Brain microvascular endothelial cell (primary cell): ENCODE measurements at regions of chr11 and their contacts with region 1.

Region 1: DNA sequence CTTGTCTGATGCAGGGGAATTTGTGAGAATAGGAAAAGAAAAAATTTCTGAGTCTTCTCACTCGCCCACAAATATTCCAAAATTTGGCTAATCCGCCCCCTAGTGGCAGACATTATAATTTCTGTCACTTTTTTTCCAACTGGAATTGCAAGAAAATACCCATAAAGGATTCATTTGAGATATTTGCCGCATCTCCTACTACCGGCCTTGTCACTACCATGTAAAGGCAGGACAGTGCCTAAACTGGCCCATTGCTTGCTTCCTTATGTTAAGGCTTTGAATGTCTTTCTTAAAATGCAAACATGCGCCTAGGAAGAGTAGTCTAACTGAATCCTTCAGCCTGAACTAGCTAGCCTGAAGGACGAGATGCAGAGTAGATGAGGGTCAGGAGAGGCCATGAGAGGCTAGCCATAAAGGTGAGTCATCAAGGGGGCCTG is 9.3 kb upstream of the CEP295 start:
- DNase-seq: peak; percentile 50
- H3K4me3 ChIP-seq: no peak overlapping the region
- H3K27ac ChIP-seq: no peak overlapping the region
- H3K27me3 ChIP-seq: peaks cover 11% of the 10 kb centered on the region
- CTCF ChIP-seq: peak; percentile 62

Region 2: GRCh38 chr11:93234602-93235207 is 417.5 kb before region 1 on chr11:
- in situ Hi-C with region 1: loop called (anchors 25 kb)
- DNase-seq: peak; percentile 85
- H3K4me3 ChIP-seq: no peak overlapping the region
- H3K27ac ChIP-seq: no peak overlapping the region
- H3K27me3 ChIP-seq: no peaks in the 10 kb centered on the region
- CTCF ChIP-seq: peak; percentile 97